K562 (cell line): ENCODE measurements at regions of chrX and their contacts with region 1.

Region 1: GRCh38 chrX:132463411-132463810 is 25.4 kb downstream of the MBNL3 start:
- DNase-seq: peak; percentile 17 to 45 (median 38)
- ATAC-seq: no peak
- H3K4me3 ChIP-seq: no peak overlapping the region
- H3K27ac ChIP-seq: no peak overlapping the region
- H3K4me1 ChIP-seq: no peaks in the 10 kb centered on the region
- H3K27me3 ChIP-seq: no peaks in the 10 kb centered on the region
- CTCF ChIP-seq: peak; percentile 38 to 59 (median 56); a peak in 5 of 6 replicates
- EP300 ChIP-seq: no peak
- POLR2A ChIP-seq: no peak
- RAD21 ChIP-seq: peak; percentile 35 to 49

Region 2: GRCh38 chrX:132292793-132293192 is 170.6 kb before region 1 on chrX:
- CTCF ChIA-PET with region 1: no interaction called
- POLR2A ChIA-PET with region 1: no interaction called
- in situ Hi-C with region 1: no loop called
- intact Hi-C with region 1: loop called (anchors 5 kb)
- DNase-seq: peak; percentile 33 to 48 (median 38)
- ATAC-seq: peak; percentile 79
- H3K4me3 ChIP-seq: no peak overlapping the region
- H3K27ac ChIP-seq: no peak overlapping the region
- H3K4me1 ChIP-seq: no peaks in the 10 kb centered on the region
- H3K27me3 ChIP-seq: no peaks in the 10 kb centered on the region
- CTCF ChIP-seq: peak; percentile 51 to 61 (median 52)
- EP300 ChIP-seq: no peak
- POLR2A ChIP-seq: no peak
- RAD21 ChIP-seq: peak; percentile 48 to 65; a peak in 3 of 4 replicates